Posterior vena cava (tissue), 2 donors: ENCODE measurements at regions of chr17 and their contacts with region 1.

Region 1: DNA sequence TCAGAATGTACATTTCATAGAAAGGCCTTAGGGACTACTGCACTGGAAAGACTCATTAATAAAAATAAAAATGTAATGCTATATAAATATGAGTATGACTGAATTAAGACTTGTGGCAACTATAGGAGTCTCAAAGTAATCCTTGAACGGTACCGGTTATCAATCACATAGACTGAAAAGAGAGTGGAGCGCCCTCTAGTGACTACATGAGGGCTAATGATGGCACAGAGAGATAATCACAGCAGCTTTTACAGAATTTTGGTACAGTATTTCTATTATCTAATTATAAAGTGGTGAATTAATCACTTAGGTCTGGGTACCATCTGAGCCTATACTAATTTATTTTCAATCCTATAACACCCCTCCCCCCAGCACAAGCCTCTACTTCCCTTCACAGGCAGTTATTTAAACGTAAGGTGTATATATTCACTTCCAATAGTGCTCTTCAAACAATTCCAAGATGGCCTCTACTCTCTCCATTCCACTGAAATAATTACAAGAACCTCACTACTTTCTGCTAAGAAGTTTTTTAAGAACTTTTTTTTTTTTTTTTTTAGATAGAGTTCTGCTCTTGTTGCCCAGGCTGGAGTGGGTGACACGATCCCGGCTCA is 40.7 kb upstream of the ANKFY1 start:
- DNase-seq: no peak

Region 2: DNA sequence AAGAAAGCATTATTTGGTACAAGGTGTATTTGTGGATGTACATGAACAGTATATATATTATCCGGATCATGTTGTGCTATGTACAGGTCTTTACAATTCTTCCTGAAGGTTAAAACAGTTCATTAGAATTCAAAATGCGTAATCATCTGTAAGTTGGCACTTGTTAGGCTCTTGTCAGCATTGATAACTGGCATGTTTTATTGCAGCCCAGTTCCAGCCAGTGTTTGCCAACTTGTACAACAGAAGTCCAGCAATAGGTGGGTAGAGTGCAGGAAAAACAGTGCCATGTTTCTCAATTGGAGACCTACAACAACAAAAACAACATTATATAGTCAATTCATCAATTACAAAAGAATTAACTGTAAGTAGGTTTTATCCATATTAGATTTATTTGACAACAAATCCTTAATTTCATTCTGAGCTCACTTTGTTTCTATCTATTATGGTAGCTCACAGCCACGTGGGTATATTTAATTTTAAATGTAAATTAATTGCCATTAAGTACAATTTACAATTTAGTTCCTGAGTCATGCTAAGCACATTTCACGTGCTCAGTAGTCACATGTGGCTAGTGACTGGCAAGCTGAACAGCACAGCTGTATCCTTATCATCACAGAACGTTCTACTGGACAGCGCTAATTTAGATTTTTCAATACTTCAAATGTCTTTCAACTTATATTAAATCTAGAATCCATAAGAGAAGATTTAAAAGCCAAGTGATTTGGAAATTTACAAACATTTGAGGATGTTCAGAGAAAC is 32.1 kb before region 1 on chr17:
- intact Hi-C with region 1: no loop called
- DNase-seq: no peak

Region 3: GRCh38 chr17:4354862-4355514 is 50.5 kb after region 1 on chr17:
- intact Hi-C with region 1: loop called in 1 of 2 experiments (anchors 10 kb)
- DNase-seq: no peak

Region 4: DNA sequence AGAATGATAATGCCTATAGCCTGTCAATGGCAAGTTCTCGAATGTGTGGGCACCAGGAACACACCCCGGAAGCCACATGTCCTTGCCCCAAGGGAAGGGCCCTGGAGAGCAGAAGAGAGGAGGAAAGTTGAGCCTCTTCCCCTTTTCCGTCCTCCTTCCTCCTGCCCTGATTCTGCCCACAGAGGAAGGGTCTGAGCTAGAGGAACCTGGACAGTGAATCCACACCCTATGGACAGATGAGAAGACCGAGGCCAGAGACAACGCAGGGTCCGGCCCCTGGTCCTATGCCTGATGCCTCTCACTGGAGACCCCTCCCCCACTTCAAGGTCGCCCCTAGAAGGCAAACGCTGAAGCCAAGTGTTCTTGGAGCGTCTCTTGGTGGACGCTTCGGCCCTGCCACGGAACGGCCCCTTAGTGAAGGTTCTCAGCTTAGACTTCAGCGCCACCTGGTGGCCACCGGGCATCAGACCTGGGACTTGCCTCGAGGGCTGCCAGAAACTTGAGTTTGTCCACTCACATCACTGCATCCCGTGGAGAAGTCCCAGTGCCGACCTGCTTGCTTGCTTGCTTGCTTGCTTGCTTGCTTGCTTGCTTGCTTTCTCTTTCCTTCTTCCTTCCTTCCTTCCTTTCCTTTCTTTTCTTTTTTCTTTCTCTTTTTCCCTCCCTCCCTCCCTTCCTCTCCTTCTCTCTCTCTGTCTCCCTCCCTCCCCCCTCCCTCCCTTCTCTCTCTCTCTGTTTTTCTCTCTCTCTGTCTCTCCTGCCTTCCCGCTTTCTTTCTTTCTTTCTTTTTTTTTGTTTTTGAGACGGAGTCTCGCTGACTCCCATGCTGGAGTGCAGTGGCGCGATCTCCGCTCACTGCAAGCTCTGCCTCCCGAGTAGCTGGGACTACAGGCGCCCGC is 108.7 kb after region 1 on chr17:
- intact Hi-C with region 1: loop called in 1 of 2 experiments (anchors 10 kb)
- DNase-seq: peak; percentile 98